Calu3 (cell line): ENCODE measurements at regions of chr1 and their contacts with region 1.

Region 1: DNA sequence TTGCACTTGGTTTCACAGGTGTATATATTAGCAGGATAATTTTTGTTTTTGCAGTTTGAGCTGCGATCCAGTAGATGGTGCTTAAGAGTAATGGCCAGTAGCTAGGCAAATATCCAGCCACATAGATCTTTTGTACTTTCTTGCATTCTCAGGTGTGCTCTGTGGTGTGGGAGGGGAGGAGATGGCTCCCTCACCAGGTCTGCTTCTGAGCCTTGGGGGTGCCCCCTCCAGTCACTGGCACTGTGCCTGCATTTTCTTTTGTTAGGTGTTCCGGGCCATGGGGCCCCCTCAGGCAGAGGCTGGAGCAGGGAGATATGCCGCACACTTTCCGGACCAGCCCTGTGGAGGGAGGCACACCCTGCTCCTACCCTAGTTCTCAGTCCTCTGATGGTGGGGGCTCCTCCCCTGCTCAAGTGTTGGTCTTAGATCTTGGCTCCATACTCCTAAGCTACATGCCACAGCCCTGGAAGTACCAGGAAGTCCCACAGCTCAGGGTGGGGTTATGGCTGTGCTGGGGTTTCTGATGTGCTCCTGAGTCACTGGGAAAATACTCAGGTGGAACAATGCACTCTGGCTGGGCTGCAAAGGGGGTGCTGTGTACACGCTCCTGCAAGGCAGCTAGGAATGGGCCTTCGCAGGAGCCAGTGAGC is 197.6 kb upstream of the DMRTA2 start:
- DNase-seq: peak; percentile 85
- H3K4me3 Mint-ChIP-seq: peak overlapping the region; percentile 63
- H3K27ac Mint-ChIP-seq: peak overlapping the region; percentile 90
- H3K4me1 Mint-ChIP-seq: peaks cover 15% of the 10 kb centered on the region
- H3K27me3 Mint-ChIP-seq: no peaks in the 10 kb centered on the region
- CTCF ChIP-seq: peak; percentile 56

Region 2: GRCh38 chr1:48697066-48697707 is 1923.6 kb before region 1 on chr1:
- CTCF ChIA-PET with region 1: interaction called, 10 read pairs
- intact Hi-C with region 1: no loop called
- DNase-seq: peak; percentile 73
- H3K4me3 Mint-ChIP-seq: no peak overlapping the region
- H3K27ac Mint-ChIP-seq: no peak overlapping the region
- H3K4me1 Mint-ChIP-seq: peaks cover 47% of the 10 kb centered on the region
- H3K27me3 Mint-ChIP-seq: no peaks in the 10 kb centered on the region
- CTCF ChIP-seq: peak; percentile 89

Region 3: DNA sequence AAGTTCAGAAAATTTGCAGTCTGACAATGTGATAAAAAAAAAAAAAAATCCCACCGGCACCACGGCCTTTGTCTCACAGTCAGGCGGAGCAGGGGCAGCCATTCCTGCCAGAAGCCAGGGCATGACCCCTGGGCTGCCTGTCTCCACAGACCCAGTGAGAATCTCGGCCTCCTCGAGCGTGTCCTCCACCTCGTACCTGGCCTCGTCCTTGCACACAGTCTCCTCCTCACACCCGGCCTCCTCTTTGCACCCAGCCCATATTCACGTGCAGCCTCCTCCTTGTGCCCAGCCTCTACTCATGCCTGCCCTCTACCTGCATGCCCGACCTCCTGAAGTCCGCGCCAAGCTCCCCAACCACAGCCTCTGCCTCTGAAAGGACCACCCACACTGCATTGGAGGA is 779.0 kb before region 1 on chr1:
- CTCF ChIA-PET with region 1: no interaction called
- intact Hi-C with region 1: no loop called
- DNase-seq: no peak
- H3K4me3 Mint-ChIP-seq: no peak overlapping the region
- H3K27ac Mint-ChIP-seq: no peak overlapping the region
- H3K4me1 Mint-ChIP-seq: no peaks in the 10 kb centered on the region
- H3K27me3 Mint-ChIP-seq: no peaks in the 10 kb centered on the region
- CTCF ChIP-seq: no peak

Region 4: GRCh38 chr1:49930501-49930900 is 690.3 kb before region 1 on chr1:
- CTCF ChIA-PET with region 1: no interaction called
- intact Hi-C with region 1: no loop called
- DNase-seq: no peak
- H3K4me3 Mint-ChIP-seq: no peak overlapping the region
- H3K27ac Mint-ChIP-seq: no peak overlapping the region
- H3K4me1 Mint-ChIP-seq: no peaks in the 10 kb centered on the region
- H3K27me3 Mint-ChIP-seq: no peaks in the 10 kb centered on the region
- CTCF ChIP-seq: no peak

Region 5: GRCh38 chr1:50704126-50704525 is 83.3 kb after region 1 on chr1:
- CTCF ChIA-PET with region 1: interaction called, 51 read pairs
- intact Hi-C with region 1: loop called (anchors 1 kb)
- DNase-seq: peak; percentile 43
- H3K4me3 Mint-ChIP-seq: no peak overlapping the region
- H3K27ac Mint-ChIP-seq: no peak overlapping the region
- H3K4me1 Mint-ChIP-seq: no peaks in the 10 kb centered on the region
- H3K27me3 Mint-ChIP-seq: no peaks in the 10 kb centered on the region
- CTCF ChIP-seq: peak; percentile 78